ENCODE measurements at regions of chr3 and their contacts with region 1.

Region 1: DNA sequence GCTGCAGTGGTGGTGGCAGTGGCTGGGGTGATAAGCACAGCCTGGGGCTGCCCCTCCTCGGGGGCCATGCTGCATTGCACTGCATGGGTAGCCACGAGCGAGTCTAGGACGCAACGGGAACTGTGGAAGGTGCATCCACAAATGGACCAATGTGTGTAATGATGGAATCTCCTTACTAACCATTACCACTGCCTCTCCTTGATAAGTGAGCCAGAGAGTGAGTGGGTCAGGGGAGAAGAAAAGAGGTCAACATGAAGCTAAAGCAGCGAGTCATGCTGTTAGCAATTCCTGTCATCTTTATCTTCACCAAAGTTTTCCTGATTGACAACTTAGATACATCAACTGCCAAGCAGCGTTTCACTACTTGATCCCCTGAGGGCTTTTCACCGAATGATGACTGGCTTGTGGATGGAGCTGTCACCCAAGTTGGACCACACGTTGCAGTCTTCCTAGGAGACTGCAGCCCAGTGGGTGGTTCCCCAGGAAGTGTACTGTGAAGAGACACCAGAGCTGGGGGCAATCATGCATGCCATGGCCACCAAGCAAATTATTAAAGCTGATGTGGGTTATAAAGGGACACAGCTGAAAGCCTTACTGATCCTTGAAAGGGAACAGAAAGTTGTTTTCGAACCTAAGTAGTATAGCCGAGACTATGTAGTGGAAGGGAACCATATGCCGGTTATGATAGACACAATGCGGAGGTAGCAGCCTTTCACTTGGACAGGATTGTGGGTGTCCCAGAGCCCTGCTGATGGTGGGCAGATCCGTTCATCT is 20.6 kb downstream of the SAMD7 start:
- DNase-seq: peak; percentile 89
- ATAC-seq: peak; percentile 83
- H3K4me3 ChIP-seq: peak overlapping the region in 4 of 5 experiments; percentile 7 to 54 (median 34)
- H3K4me3 Mint-ChIP-seq: peak overlapping the region; percentile 82
- H3K27ac ChIP-seq: peak overlapping the region; percentile 83 to 86
- H3K27ac Mint-ChIP-seq: peak overlapping the region; percentile 97
- H3K4me1 ChIP-seq: peaks cover 49 to 53% of the 10 kb centered on the region in 2 donors
- H3K4me1 Mint-ChIP-seq: peaks cover 55% of the 10 kb centered on the region
- H3K27me3 ChIP-seq: no peaks in the 10 kb centered on the region
- H3K27me3 Mint-ChIP-seq: no peaks in the 10 kb centered on the region
- CTCF ChIP-seq: no peak

Region 2: GRCh38 chr3:169772897-169773828 is 158.8 kb before region 1 on chr3 and contains the start of gene MYNN:
- CTCF ChIA-PET with region 1: interaction called, 3 read pairs
- POLR2A ChIA-PET with region 1: interaction called, 3 read pairs
- intact Hi-C with region 1: loop called (anchors 5 kb)
- DNase-seq: peak; percentile 96
- ATAC-seq: peak; percentile 78
- H3K4me3 ChIP-seq: peak within 1 kb of the TSS; percentile 89 to 97 (median 91)
- H3K4me3 Mint-ChIP-seq: peak within 1 kb of the TSS; percentile 100
- H3K27ac ChIP-seq: peak within 1 kb of the TSS; percentile 97
- H3K27ac Mint-ChIP-seq: peak within 1 kb of the TSS; percentile 99
- H3K4me1 ChIP-seq: peaks cover 16 to 19% of the 10 kb centered on the region in 2 donors
- H3K4me1 Mint-ChIP-seq: peaks cover 50% of the 10 kb centered on the region
- H3K27me3 ChIP-seq: no peaks in the 10 kb centered on the region
- H3K27me3 Mint-ChIP-seq: no peaks in the 10 kb centered on the region
- CTCF ChIP-seq: no peak
- total RNA-seq, gene MYNN: 24.0 and 25.5 TPM in 2 replicates

Region 3: DNA sequence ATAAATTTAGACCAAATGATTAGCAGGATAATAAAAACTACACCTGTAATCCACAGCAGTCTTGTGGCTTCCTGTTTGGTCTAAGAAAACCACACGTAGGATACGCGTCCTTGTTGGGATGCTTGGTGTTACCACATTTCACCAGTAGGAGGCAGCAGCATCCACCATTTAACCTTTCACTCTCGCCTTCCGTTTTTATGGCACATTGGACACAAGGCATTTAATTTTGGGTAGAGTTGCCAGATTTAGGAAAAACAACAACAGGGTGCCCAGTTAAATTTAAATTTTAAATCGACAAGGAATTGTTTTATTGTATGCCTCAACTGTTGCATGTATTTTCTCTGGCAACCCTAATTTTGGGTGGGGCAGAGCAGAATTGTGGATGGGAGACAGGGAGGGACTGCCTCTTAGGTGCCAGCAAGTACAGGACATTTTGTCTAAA is 68.5 kb before region 1 on chr3:
- CTCF ChIA-PET with region 1: interaction called, 7 read pairs
- POLR2A ChIA-PET with region 1: interaction called, 3 read pairs
- intact Hi-C with region 1: loop called (anchors 2 kb)
- DNase-seq: peak; percentile 87
- ATAC-seq: peak; percentile 55
- H3K4me3 ChIP-seq: no peak overlapping the region
- H3K4me3 Mint-ChIP-seq: no peak overlapping the region
- H3K27ac ChIP-seq: no peak overlapping the region
- H3K27ac Mint-ChIP-seq: peak overlapping the region; percentile 44
- H3K4me1 ChIP-seq: peaks cover 27 to 32% of the 10 kb centered on the region in 2 donors
- H3K4me1 Mint-ChIP-seq: peaks cover 23% of the 10 kb centered on the region
- H3K27me3 ChIP-seq: no peaks in the 10 kb centered on the region
- H3K27me3 Mint-ChIP-seq: no peaks in the 10 kb centered on the region
- CTCF ChIP-seq: peak; percentile 97

Region 4: GRCh38 chr3:169954142-169954756 is 22.3 kb after region 1 on chr3:
- CTCF ChIA-PET with region 1: interaction called, 77 read pairs
- POLR2A ChIA-PET with region 1: interaction called, 7 read pairs
- intact Hi-C with region 1: no loop called
- DNase-seq: peak; percentile 66
- ATAC-seq: peak; percentile 83
- H3K4me3 ChIP-seq: peak overlapping the region in 4 of 5 experiments; percentile 19 to 36 (median 27)
- H3K4me3 Mint-ChIP-seq: peak overlapping the region; percentile 71
- H3K27ac ChIP-seq: peak overlapping the region; percentile 71 to 89
- H3K27ac Mint-ChIP-seq: peak overlapping the region; percentile 93
- H3K4me1 ChIP-seq: peaks cover 38 to 45% of the 10 kb centered on the region in 2 donors
- H3K4me1 Mint-ChIP-seq: peaks cover 56% of the 10 kb centered on the region
- H3K27me3 ChIP-seq: no peaks in the 10 kb centered on the region
- H3K27me3 Mint-ChIP-seq: no peaks in the 10 kb centered on the region
- CTCF ChIP-seq: no peak

Region 5: GRCh38 chr3:169980055-169980454 is 48.1 kb after region 1 on chr3:
- CTCF ChIA-PET with region 1: interaction called, 18 read pairs
- POLR2A ChIA-PET with region 1: interaction called, 5 read pairs
- intact Hi-C with region 1: no loop called
- DNase-seq: no peak
- ATAC-seq: no peak
- H3K4me3 ChIP-seq: no peak overlapping the region
- H3K4me3 Mint-ChIP-seq: no peak overlapping the region
- H3K27ac ChIP-seq: peak overlapping the region in 1 of 2 donors; percentile 55
- H3K27ac Mint-ChIP-seq: peak overlapping the region; percentile 33
- H3K4me1 ChIP-seq: peaks cover 9 to 25% of the 10 kb centered on the region in 2 donors
- H3K4me1 Mint-ChIP-seq: peaks cover 37% of the 10 kb centered on the region
- H3K27me3 ChIP-seq: no peaks in the 10 kb centered on the region
- H3K27me3 Mint-ChIP-seq: no peaks in the 10 kb centered on the region
- CTCF ChIP-seq: no peak

Region 6: GRCh38 chr3:170007031-170007663 is 75.2 kb after region 1 on chr3:
- CTCF ChIA-PET with region 1: interaction called, 12 read pairs
- POLR2A ChIA-PET with region 1: no interaction called
- intact Hi-C with region 1: no loop called
- DNase-seq: peak; percentile 40
- ATAC-seq: peak; percentile 54
- H3K4me3 ChIP-seq: no peak overlapping the region
- H3K4me3 Mint-ChIP-seq: peak overlapping the region; percentile 1
- H3K27ac ChIP-seq: peak overlapping the region in 1 of 2 donors; percentile 39
- H3K27ac Mint-ChIP-seq: peak overlapping the region; percentile 1
- H3K4me1 ChIP-seq: peaks cover 33 to 38% of the 10 kb centered on the region in 2 donors
- H3K4me1 Mint-ChIP-seq: peaks cover 48% of the 10 kb centered on the region
- H3K27me3 ChIP-seq: no peaks in the 10 kb centered on the region
- H3K27me3 Mint-ChIP-seq: no peaks in the 10 kb centered on the region
- CTCF ChIP-seq: no peak

Measured in B cell (primary cell).